Astrocyte of the cerebellum (primary cell): ENCODE measurements at regions of chr3 and their contacts with region 1.

Region 1: GRCh38 chr3:16247276-16248061 is 17.3 kb downstream of the DPH3 start:
- DNase-seq: peak; percentile 73
- H3K4me3 ChIP-seq: no peak overlapping the region
- CTCF ChIP-seq: peak; percentile 84

Region 2: GRCh38 chr3:15629860-15630597 is 617.4 kb before region 1 on chr3:
- in situ Hi-C with region 1: loop called (anchors 25 kb)
- DNase-seq: peak; percentile 79
- H3K4me3 ChIP-seq: no peak overlapping the region
- CTCF ChIP-seq: peak; percentile 71

Region 3: DNA sequence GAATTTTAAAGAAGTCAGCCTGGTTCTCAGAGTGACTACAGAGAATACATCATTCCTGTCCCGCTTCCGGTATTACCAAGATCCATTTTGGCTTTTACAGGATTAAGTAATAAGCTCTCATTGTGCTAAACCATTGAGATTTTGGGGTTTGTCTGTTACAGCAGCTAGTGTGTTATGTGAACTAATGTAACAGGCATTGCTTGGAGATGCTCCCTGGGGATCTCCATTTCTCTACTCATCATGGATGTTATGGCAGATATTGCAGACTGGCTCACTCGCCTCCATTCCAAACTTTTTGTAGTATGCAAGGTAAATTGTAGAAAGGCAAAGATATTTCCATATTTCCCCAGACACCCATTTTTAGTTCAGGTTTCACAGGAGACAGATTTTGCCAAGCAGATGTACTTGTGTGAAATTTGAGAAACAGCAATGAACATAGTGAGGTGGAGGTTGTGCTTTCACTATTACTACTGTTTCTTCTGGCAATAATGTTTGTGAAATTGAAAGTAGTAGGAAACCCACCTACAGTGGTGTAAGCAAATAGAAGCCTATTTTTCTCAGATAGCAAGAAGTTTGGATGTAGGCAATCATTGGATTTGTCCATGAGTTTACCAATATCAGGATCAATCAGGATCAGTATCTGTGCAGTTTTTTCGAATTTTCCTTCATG is 250.1 kb before region 1 on chr3:
- in situ Hi-C with region 1: no loop called
- DNase-seq: no peak
- H3K4me3 ChIP-seq: no peak overlapping the region
- CTCF ChIP-seq: no peak